ENCODE measurements at regions of chr11 and their contacts with region 1.

Region 1: GRCh38 chr11:4072668-4073285 is 21.8 kb upstream of the RRM1 start:
- DNase-seq: peak; percentile 45
- H3K4me3 Mint-ChIP-seq: no peak overlapping the region
- H3K27ac Mint-ChIP-seq: no peak overlapping the region
- H3K4me1 Mint-ChIP-seq: peaks cover 29% of the 10 kb centered on the region
- H3K27me3 Mint-ChIP-seq: no peaks in the 10 kb centered on the region

Region 2: DNA sequence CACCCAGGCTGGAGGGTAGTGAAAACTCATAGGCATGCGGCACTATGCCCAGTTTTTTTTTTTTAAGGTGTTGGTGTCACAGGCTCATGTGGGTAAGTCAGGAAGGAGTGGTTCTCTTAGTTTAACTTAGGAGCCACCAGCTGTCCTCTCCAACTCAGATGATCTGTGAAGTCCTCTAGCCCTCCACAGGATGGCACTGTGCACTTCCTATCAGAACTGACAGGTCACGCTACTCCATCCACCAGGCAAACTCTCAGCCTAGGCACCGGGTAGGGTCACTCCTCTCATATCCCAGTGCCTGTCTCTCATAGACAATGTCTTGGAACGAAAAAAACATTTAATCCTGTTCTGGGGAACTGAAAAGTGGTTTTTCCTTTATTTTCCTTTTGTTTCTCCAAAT is 1097.2 kb before region 1 on chr11:
- intact Hi-C with region 1: no loop called
- DNase-seq: peak; percentile 14
- H3K4me3 Mint-ChIP-seq: no peak overlapping the region
- H3K27ac Mint-ChIP-seq: no peak overlapping the region
- H3K4me1 Mint-ChIP-seq: peaks cover 29% of the 10 kb centered on the region
- H3K27me3 Mint-ChIP-seq: no peaks in the 10 kb centered on the region

Region 3: GRCh38 chr11:3781423-3781822 is 291.4 kb before region 1 on chr11:
- intact Hi-C with region 1: loop called (anchors 1 kb)
- DNase-seq: no peak
- H3K4me3 Mint-ChIP-seq: peak overlapping the region; percentile 47
- H3K27ac Mint-ChIP-seq: peak overlapping the region; percentile 71
- H3K4me1 Mint-ChIP-seq: peaks cover 58% of the 10 kb centered on the region
- H3K27me3 Mint-ChIP-seq: no peaks in the 10 kb centered on the region

Region 4: DNA sequence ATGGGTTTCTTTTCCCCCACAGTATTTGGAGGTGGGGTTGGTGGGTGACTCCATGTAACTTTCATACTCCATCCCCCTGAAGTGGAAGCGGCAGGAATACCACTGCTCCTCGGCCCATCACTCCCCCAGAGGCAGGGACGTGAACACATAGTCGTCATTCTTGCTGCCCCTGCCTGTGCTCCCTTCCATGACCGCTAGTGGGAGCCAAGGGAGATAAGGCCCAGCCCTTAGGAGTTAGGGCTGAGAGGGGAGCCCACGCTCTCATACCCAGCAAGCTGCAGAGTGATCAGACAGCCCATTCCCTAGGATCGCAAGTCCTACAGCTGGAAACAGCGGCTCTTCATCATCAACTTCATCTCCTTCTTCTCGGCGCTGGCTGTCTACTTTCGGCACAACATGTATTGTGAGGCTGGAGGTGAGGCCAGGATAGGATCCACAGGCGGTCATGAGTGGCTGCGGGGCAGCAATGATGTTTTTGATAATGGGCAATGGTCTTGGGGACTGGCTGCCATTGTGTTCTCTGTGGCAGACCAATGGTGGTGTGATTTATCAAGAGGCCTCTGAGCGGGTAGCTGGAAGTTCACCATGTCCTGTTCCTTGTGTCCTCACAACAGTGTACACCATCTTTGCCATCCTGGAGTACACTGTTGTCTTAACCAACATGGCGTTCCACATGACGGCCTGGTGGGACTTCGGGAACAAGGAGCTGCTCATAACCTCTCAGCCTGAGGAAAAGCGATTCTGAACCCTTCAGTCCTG is 247.9 kb before region 1 on chr11:
- intact Hi-C with region 1: loop called (anchors 1 kb)
- DNase-seq: peak; percentile 68
- H3K4me3 Mint-ChIP-seq: no peak overlapping the region
- H3K27ac Mint-ChIP-seq: no peak overlapping the region
- H3K4me1 Mint-ChIP-seq: peaks cover 38% of the 10 kb centered on the region
- H3K27me3 Mint-ChIP-seq: no peaks in the 10 kb centered on the region

Region 5: DNA sequence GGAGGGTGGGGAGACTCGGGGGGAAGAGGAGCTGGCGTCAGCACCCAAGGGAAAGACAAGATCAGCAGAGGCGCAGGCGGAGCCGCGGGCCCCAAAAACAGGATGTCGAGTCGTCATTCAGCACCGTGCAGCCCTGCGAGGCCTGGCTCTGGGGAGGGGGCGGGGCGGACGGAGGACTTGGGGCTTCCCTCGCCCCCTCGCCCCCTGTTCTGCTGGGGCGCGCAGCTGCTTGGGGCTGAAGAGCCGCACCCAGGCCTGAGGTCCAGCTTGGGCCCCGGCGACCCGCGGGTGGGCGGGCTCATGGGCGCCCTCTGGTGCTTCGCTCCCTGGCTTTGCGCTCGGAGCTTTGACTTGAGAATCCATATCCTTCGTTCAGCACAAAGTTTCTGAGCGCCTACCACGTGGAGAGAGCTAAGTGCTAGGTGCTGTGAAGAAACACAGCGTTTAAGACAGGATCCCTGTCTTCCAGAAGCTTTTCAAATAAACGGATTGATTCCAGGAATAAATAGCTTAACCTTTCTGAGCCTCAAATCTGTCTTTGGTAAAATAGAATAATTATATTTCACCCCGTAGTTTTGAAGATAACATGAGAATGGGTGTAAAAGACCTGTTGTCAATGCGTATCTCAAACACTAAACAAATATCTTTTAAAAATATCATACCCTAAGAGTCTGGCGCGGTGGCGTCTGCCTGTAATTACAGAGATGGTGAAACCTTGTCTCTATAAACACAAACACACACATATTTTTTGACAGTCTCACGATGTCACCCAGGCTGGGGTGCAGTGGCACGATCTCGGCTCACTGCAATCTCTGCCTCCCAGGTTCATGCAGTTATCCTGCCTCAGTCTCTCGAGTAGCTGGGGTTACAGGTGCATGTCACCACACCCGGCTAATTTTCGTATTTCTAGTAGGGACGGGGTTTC is 231.1 kb before region 1 on chr11:
- intact Hi-C with region 1: loop called (anchors 2 kb)
- DNase-seq: peak; percentile 89
- H3K4me3 Mint-ChIP-seq: peak overlapping the region; percentile 81
- H3K27ac Mint-ChIP-seq: peak overlapping the region; percentile 97
- H3K4me1 Mint-ChIP-seq: peaks cover 59% of the 10 kb centered on the region
- H3K27me3 Mint-ChIP-seq: no peaks in the 10 kb centered on the region

Region 6: GRCh38 chr11:3849297-3849874 is 223.4 kb before region 1 on chr11:
- intact Hi-C with region 1: loop called (anchors 1 kb)
- DNase-seq: peak; percentile 37
- H3K4me3 Mint-ChIP-seq: no peak overlapping the region
- H3K27ac Mint-ChIP-seq: no peak overlapping the region
- H3K4me1 Mint-ChIP-seq: peaks cover 47% of the 10 kb centered on the region
- H3K27me3 Mint-ChIP-seq: no peaks in the 10 kb centered on the region

Region 7: DNA sequence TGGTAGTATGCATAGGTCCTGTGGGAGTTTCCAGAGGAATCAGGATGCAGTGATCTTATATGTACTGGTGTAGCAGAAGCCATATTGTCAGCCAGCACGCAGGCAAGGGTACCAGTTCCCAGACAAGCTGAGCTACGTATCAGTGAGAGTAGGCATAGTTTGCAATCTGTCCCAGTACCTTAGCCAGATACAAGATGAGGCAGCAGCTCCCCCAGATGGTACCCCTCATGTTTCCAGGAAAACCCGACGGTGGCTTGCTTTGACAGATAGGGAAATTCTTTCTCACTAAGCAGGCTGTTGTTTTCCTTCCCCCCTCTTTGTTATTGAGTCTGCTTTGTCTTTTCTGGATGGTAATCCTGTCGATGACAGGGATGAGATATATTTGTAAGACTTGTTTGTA is 87.9 kb before region 1 on chr11:
- intact Hi-C with region 1: loop called (anchors 5 kb)
- DNase-seq: peak; percentile 8
- H3K4me3 Mint-ChIP-seq: no peak overlapping the region
- H3K27ac Mint-ChIP-seq: peak overlapping the region; percentile 59
- H3K4me1 Mint-ChIP-seq: peaks cover 76% of the 10 kb centered on the region
- H3K27me3 Mint-ChIP-seq: no peaks in the 10 kb centered on the region

Region 8: GRCh38 chr11:4881860-4882500 is 809.2 kb after region 1 on chr11 and contains the start of gene OR51T1:
- intact Hi-C with region 1: no loop called
- DNase-seq: no peak
- H3K4me3 Mint-ChIP-seq: no peak within 1 kb of the TSS
- H3K27ac Mint-ChIP-seq: no peak within 1 kb of the TSS
- H3K4me1 Mint-ChIP-seq: no peaks in the 10 kb centered on the region
- H3K27me3 Mint-ChIP-seq: no peaks in the 10 kb centered on the region
- total RNA-seq, gene OR51T1: not detected in 2 replicates

Measured in activated T-helper 1 cell treated with anti-CD3 and anti-CD28 coated beads, Interleukin-12 subunit alpha, Interleukin-12 subunit beta, Interleukin-2, Interleukin-4 antibody, amounts not matched to agents 30 ng/mL and 10 ng/mL and 1 ng/mL, durations not matched to agents 14 hours and 24 hours and 36 hours (primary cell).